CD14-positive monocyte (primary cell): ENCODE measurements at regions of chr6 and their contacts with region 1.

Region 1: GRCh38 chr6:28136585-28137504 is 4.8 kb upstream of the ZKSCAN8 start:
- DNase-seq: peak; percentile 80 to 89 (median 87)
- H3K4me3 ChIP-seq: peak overlapping the region; percentile 67 to 95 (median 92)
- H3K4me3 Mint-ChIP-seq: peak overlapping the region; percentile 95 to 99
- H3K27ac ChIP-seq: peak overlapping the region; percentile 91 to 94
- H3K27ac Mint-ChIP-seq: peak overlapping the region; percentile 95 to 99 (median 98)
- H3K4me1 ChIP-seq: peaks cover 26 to 38% of the 10 kb centered on the region in 2 donors
- H3K4me1 Mint-ChIP-seq: peaks cover 54% of the 10 kb centered on the region
- H3K27me3 ChIP-seq: no peaks in the 10 kb centered on the region
- H3K27me3 Mint-ChIP-seq: peaks cover 0 to 6% (median 2%) of the 10 kb centered on the region in 3 donors
- CTCF ChIP-seq: no peak

Region 2: GRCh38 chr6:27472617-27473400 is 664.0 kb before region 1 on chr6 and contains the start of gene ZNF184:
- intact Hi-C with region 1: loop called in 1 of 2 experiments (anchors 10 kb)
- DNase-seq: peak; percentile 87 to 93 (median 91)
- H3K4me3 ChIP-seq: peak within 1 kb of the TSS; percentile 55 to 88 (median 81)
- H3K4me3 Mint-ChIP-seq: peak within 1 kb of the TSS; percentile 97
- H3K27ac ChIP-seq: peak within 1 kb of the TSS; percentile 75 to 89
- H3K27ac Mint-ChIP-seq: peak within 1 kb of the TSS; percentile 89 to 98 (median 95)
- H3K4me1 ChIP-seq: peaks cover 12 to 16% of the 10 kb centered on the region in 2 donors
- H3K4me1 Mint-ChIP-seq: peaks cover 19% of the 10 kb centered on the region
- H3K27me3 ChIP-seq: no peaks in the 10 kb centered on the region
- H3K27me3 Mint-ChIP-seq: peaks cover 0 to 3% (median 2%) of the 10 kb centered on the region in 3 donors
- CTCF ChIP-seq: no peak
- polyA plus RNA-seq, gene ZNF184: 1.00 to 1.5 (median 1.5) TPM

Region 3: DNA sequence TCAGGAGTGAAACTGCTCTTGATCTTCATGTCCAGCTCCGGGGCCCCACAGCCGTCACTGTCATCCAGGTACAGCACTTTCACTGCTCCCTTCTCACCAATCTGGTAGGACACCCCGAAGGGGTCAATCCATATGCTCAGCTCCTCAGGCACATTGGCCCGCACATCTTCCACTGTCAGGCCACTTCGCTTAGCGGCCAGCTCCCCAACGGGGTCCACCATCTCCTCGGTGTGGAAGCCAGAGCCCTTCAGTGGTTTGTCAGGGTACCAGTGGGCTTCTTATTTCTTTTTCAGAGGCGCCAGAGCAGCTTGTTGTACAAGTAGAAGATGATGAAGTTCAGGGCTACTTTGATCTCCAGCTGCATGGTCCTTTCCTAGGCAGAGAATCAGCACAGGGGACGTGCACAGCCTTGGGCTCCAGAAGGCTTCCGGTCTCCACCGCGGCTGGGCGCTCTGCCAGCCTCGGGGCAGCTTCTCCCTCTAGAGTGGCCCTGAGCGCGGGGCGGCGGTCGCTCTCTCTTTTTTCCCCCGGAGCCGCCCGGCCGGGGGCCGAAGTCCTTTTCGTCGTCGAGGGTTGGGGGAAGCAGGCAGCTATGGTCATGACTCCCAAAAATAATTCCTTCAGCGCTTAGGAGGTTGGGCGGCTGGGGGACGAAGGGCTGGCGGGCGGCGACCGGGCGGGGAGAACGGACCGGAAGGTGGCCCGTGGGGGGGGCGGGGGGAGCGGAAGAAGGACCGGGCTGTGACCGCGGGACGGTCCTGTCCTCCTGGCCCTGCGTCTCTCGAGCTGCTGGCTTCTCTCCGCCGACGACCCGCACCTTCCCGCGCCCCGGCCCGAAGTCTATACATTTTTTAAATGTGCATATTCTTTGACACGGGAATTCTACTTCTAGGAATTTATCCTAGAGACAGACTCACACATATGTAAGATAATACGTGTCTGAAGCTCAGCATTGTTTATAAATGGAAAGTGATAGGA is 81.7 kb after region 1 on chr6:
- intact Hi-C with region 1: loop called (anchors 5 to 10 kb)
- DNase-seq: peak; percentile 52 to 66 (median 63)
- H3K4me3 ChIP-seq: peak overlapping the region; percentile 56 to 78 (median 72)
- H3K4me3 Mint-ChIP-seq: peak overlapping the region; percentile 87 to 93
- H3K27ac ChIP-seq: peak overlapping the region; percentile 55 to 60
- H3K27ac Mint-ChIP-seq: peak overlapping the region; percentile 43 to 91 (median 84)
- H3K4me1 ChIP-seq: peaks cover 10 to 15% of the 10 kb centered on the region in 2 donors
- H3K4me1 Mint-ChIP-seq: peaks cover 27% of the 10 kb centered on the region
- H3K27me3 ChIP-seq: peaks cover 45 to 56% of the 10 kb centered on the region in 2 donors
- H3K27me3 Mint-ChIP-seq: peaks cover 46 to 64% (median 54%) of the 10 kb centered on the region in 3 donors
- CTCF ChIP-seq: no peak

Region 4: GRCh38 chr6:28252009-28252975 is 115.4 kb after region 1 on chr6 and contains the start of gene ZKSCAN4:
- intact Hi-C with region 1: loop called (anchors 10 kb)
- DNase-seq: peak; percentile 72 to 86 (median 78)
- H3K4me3 ChIP-seq: peak within 1 kb of the TSS; percentile 83 to 99 (median 99)
- H3K4me3 Mint-ChIP-seq: peak within 1 kb of the TSS; percentile 98
- H3K27ac ChIP-seq: peak within 1 kb of the TSS; percentile 46 to 73
- H3K27ac Mint-ChIP-seq: peak within 1 kb of the TSS; percentile 85 to 93 (median 88)
- H3K4me1 ChIP-seq: peaks cover 33 to 39% of the 10 kb centered on the region in 2 donors
- H3K4me1 Mint-ChIP-seq: peaks cover 40% of the 10 kb centered on the region
- H3K27me3 ChIP-seq: no peaks in the 10 kb centered on the region
- H3K27me3 Mint-ChIP-seq: peaks cover 0 to 1% (median 0%) of the 10 kb centered on the region in 3 donors
- CTCF ChIP-seq: no peak
- polyA plus RNA-seq, gene ZKSCAN4: 1.5 to 2.0 (median 1.6) TPM

Region 5: GRCh38 chr6:28355743-28356665 is 219.2 kb after region 1 on chr6:
- intact Hi-C with region 1: loop called in 1 of 2 experiments (anchors 10 kb)
- DNase-seq: peak; percentile 67 to 80 (median 76)
- H3K4me3 ChIP-seq: peak overlapping the region; percentile 75 to 98 (median 98)
- H3K4me3 Mint-ChIP-seq: peak overlapping the region; percentile 95 to 99
- H3K27ac ChIP-seq: peak overlapping the region; percentile 58 to 92
- H3K27ac Mint-ChIP-seq: peak overlapping the region; percentile 92 to 98 (median 95)
- H3K4me1 ChIP-seq: peaks cover 18 to 24% of the 10 kb centered on the region in 2 donors
- H3K4me1 Mint-ChIP-seq: peaks cover 28% of the 10 kb centered on the region
- H3K27me3 ChIP-seq: no peaks in the 10 kb centered on the region
- H3K27me3 Mint-ChIP-seq: peaks cover 0 to 1% (median 0%) of the 10 kb centered on the region in 3 donors
- CTCF ChIP-seq: peak; percentile 85